CD4-positive, alpha-beta T cell (primary cell): ENCODE measurements at regions of chr13 and their contacts with region 1.

Region 1: GRCh38 chr13:95754069-95754468 is 77.1 kb downstream of the DNAJC3 start:
- DNase-seq: no peak
- ATAC-seq: no peak
- H3K4me3 ChIP-seq: no peak overlapping the region
- H3K4me3 Mint-ChIP-seq: no peak overlapping the region
- H3K27ac ChIP-seq: no peak overlapping the region
- H3K27ac Mint-ChIP-seq: no peak overlapping the region
- H3K4me1 ChIP-seq: peaks cover 4% of the 10 kb centered on the region
- H3K4me1 Mint-ChIP-seq: peaks cover 14% of the 10 kb centered on the region
- H3K27me3 ChIP-seq: no peaks in the 10 kb centered on the region
- H3K27me3 Mint-ChIP-seq: no peaks in the 10 kb centered on the region
- CTCF ChIP-seq: no peak

Region 2: DNA sequence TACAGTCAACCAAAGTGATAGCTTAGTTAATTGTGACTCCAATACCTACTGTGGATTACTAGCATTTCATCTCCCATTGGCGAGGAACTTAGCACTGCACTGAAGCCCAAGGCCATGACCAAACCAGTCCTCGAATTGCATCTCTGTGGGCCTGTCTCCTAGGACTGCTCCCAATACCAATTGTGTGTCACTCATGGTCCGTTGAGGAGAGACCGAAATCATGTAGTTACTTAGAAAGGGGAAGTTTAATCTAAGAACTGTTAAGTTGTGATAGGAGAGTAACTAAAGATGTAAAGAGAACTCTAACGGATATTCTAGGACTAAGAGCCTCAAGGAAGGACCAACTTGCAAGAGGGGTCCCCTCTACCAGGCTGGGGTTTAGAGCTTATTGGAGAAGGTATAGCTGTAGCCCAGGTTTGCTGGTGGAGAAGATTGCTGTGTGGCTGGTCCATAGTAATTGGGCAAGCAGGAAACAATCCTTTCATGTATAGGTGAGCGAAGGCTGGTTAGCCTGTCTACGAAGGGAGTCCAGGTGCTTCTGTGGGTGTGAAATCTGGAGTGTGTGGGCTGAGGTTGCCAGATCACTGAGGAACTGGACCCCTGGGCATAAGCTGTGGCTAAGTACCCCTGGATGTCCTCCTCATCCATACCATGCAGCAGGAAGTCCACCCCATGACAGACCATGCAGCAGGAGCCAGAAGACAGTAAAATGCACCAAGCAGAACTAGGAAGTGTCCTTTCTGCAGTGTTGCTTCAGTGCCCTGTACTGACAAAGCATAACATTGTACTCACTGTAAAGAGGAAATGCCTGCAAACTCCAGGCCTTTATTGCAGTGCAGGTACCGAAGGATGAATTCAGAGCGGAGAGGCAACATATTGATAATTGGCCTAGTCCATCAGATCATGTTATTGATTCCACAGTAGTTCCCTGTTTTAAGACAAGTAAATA is 46.4 kb before region 1 on chr13:
- CTCF ChIA-PET with region 1: no interaction called
- POLR2A ChIA-PET with region 1: no interaction called
- intact Hi-C with region 1: loop called in 1 of 2 experiments (anchors 5 kb)
- DNase-seq: no peak
- ATAC-seq: no peak
- H3K4me3 ChIP-seq: no peak overlapping the region
- H3K4me3 Mint-ChIP-seq: no peak overlapping the region
- H3K27ac ChIP-seq: no peak overlapping the region
- H3K27ac Mint-ChIP-seq: peak overlapping the region; percentile 63
- H3K4me1 ChIP-seq: peaks cover 26% of the 10 kb centered on the region
- H3K4me1 Mint-ChIP-seq: peaks cover 61% of the 10 kb centered on the region
- H3K27me3 ChIP-seq: no peaks in the 10 kb centered on the region
- H3K27me3 Mint-ChIP-seq: no peaks in the 10 kb centered on the region
- CTCF ChIP-seq: no peak

Region 3: DNA sequence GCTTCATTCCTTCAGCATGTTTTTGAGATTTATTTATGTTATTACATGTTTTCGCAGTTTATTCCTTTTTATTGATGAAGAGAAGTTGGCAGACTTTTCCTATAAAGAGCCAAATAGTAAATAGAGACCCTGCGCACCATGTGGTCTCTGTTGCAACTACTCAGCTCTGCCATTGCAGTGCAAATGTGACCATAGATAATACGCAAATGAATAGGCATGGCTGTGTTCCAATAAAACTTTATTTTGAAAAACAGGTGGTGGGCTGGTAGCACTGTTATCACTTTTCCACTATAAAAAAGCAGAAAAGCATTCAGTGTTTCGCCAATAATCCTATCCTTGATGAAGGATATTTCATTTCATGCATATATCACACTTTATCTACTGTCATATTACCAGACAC is 17.8 kb after region 1 on chr13:
- CTCF ChIA-PET with region 1: no interaction called
- POLR2A ChIA-PET with region 1: no interaction called
- intact Hi-C with region 1: no loop called
- DNase-seq: no peak
- ATAC-seq: no peak
- H3K4me3 ChIP-seq: no peak overlapping the region
- H3K4me3 Mint-ChIP-seq: no peak overlapping the region
- H3K27ac ChIP-seq: no peak overlapping the region
- H3K27ac Mint-ChIP-seq: no peak overlapping the region
- H3K4me1 ChIP-seq: no peaks in the 10 kb centered on the region
- H3K4me1 Mint-ChIP-seq: peaks cover 9% of the 10 kb centered on the region
- H3K27me3 ChIP-seq: no peaks in the 10 kb centered on the region
- H3K27me3 Mint-ChIP-seq: no peaks in the 10 kb centered on the region
- CTCF ChIP-seq: no peak

Region 4: DNA sequence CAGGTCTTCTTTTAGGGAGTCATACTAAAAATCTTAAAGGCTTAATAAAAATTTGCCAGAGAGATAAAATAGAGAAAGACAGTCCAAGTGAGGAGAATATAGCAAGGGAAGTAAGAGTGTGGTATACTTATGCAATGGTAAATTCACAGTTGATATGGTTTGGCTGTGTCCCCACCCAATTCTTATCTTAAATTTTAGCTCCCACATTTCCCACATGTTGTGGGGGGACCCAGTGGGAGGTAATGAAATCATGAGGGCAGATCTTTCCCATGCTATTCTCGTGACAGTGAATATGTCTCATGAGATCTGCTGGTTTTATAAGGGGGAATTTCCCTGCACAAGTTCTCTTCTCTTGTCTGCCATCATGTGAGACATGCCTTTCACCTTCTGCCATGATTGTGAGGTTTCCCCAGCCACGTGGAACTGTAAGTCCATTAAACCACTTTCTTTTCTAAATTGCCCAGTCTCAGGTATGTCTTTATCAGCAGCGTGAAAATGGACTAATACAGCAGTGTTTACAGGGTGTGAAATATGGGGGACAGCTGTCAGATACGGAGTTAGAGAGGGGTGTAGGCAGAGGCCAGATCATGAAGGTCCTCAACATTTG is 183.7 kb after region 1 on chr13:
- CTCF ChIA-PET with region 1: no interaction called
- POLR2A ChIA-PET with region 1: no interaction called
- intact Hi-C with region 1: no loop called
- DNase-seq: no peak
- ATAC-seq: no peak
- H3K4me3 ChIP-seq: no peak overlapping the region
- H3K4me3 Mint-ChIP-seq: no peak overlapping the region
- H3K27ac ChIP-seq: no peak overlapping the region
- H3K27ac Mint-ChIP-seq: no peak overlapping the region
- H3K4me1 ChIP-seq: no peaks in the 10 kb centered on the region
- H3K4me1 Mint-ChIP-seq: no peaks in the 10 kb centered on the region
- H3K27me3 ChIP-seq: no peaks in the 10 kb centered on the region
- H3K27me3 Mint-ChIP-seq: no peaks in the 10 kb centered on the region
- CTCF ChIP-seq: no peak